ENCODE measurements at regions of chr15 and their contacts with region 1.

Region 1: GRCh38 chr15:38389924-38390542 is 63.9 kb upstream of the FAM98B start:
- DNase-seq: no peak
- H3K4me3 ChIP-seq: no peak overlapping the region
- H3K27me3 ChIP-seq: 0 out of 2 replicates have a peak, but pooled peaks cover 3% of the 10 kb centered on the region
- CTCF ChIP-seq: peak; percentile 90

Region 2: GRCh38 chr15:37995461-37996347 is 394.3 kb before region 1 on chr15:
- CTCF ChIA-PET with region 1: interaction called, 61 read pairs
- POLR2A ChIA-PET with region 1: no interaction called
- DNase-seq: peak; percentile 24
- H3K4me3 ChIP-seq: no peak overlapping the region
- H3K27me3 ChIP-seq: peaks cover 2% of the 10 kb centered on the region
- CTCF ChIP-seq: peak; percentile 60

Region 3: GRCh38 chr15:38002883-38003477 is 387.1 kb before region 1 on chr15:
- CTCF ChIA-PET with region 1: interaction called, 61 read pairs
- POLR2A ChIA-PET with region 1: no interaction called
- DNase-seq: no peak
- H3K4me3 ChIP-seq: no peak overlapping the region
- H3K27me3 ChIP-seq: no peaks in the 10 kb centered on the region
- CTCF ChIP-seq: peak; percentile 73

Region 4: GRCh38 chr15:38252481-38253412 is 137.3 kb before region 1 on chr15 and contains the start of gene SPRED1:
- CTCF ChIA-PET with region 1: interaction called, 20 read pairs
- POLR2A ChIA-PET with region 1: no interaction called
- DNase-seq: no peak
- H3K4me3 ChIP-seq: peak within 1 kb of the TSS; percentile 94
- H3K27me3 ChIP-seq: no peaks in the 10 kb centered on the region
- CTCF ChIP-seq: no peak
- polyA plus RNA-seq, gene SPRED1: 5.2 and 7.9 TPM in 2 replicates

Region 5: DNA sequence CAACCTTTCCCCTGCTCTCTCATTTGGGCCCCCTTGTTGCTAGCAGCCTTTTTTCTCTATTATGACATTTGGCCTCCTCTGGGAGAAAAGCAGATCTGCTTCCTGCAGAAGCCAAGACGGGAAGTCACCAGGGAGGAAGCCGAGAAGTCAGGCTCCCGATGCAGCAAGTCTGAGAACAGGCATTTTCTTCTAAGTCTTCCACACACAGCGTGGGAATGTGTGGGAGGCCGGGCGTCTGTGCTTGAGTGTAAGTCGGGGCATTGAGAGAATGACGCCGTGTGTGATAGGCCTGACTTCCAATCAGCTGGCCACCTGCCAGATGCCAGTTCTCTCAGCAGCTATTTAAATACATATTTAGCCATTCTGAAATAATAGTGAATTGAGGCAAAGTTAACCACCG is 11.9 kb before region 1 on chr15:
- CTCF ChIA-PET with region 1: interaction called, 33 read pairs
- POLR2A ChIA-PET with region 1: no interaction called
- DNase-seq: no peak
- H3K4me3 ChIP-seq: no peak overlapping the region
- H3K27me3 ChIP-seq: peaks cover 3% of the 10 kb centered on the region; the same call in 1 of the 2 replicates
- CTCF ChIP-seq: no peak

Region 6: GRCh38 chr15:38414357-38414756 is 24.3 kb after region 1 on chr15:
- CTCF ChIA-PET with region 1: interaction called, 11 read pairs
- POLR2A ChIA-PET with region 1: no interaction called
- DNase-seq: no peak
- H3K4me3 ChIP-seq: no peak overlapping the region
- H3K27me3 ChIP-seq: peaks cover 19% of the 10 kb centered on the region
- CTCF ChIP-seq: peak; percentile 84

Region 7: DNA sequence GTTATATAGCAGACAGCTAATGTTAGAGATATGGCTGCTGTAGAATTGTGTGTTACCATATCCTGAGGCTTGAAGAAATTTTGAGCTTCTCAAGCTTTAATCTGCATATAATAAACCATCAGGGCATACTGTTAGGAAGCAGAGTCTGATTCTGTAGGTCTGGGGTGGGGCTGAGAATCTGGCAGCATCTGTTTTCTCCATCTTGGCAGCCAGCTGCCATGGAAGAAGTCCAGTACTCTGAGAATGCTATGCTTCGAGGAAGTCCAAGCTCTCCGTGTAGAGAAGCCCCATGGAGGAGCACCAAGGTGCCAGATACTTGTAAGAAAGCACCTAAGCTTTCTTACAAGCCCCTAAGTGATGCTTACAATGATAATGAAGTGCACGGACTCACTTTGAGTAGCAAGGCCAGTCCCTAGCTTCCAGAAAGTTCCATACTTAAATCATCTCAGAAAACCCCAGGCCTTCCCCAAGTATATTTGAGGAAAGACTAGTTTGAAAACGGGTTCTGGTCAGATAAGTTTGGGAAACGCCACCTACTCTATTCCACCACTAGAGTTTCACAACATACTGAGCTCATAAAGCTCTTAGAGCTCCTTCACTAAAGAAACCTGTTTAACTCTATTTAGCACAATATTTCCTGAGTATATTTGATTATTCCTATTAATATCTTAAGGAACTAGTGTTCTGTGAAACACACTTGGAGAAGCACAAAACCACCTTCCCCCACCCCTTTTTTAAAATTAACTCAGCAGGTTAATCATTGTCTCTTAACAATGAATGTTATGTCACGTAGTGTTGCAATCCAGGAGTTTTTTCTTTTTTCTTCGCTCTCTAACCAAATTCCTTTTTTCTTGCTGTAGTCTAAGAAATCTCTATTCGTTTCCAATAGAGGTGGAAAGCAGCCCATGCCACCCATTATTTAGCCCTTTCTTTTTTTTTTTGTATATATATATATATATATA is 234.5 kb after region 1 on chr15:
- CTCF ChIA-PET with region 1: no interaction called
- POLR2A ChIA-PET with region 1: no interaction called
- DNase-seq: no peak
- H3K4me3 ChIP-seq: no peak overlapping the region
- H3K27me3 ChIP-seq: peaks cover 15% of the 10 kb centered on the region
- CTCF ChIP-seq: no peak